GM23248 (cell line): ENCODE measurements at regions of chr1 and their contacts with region 1.

Region 1: GRCh38 chr1:230772457-230773395 is 25.5 kb downstream of the CAPN9 start:
- DNase-seq: peak; percentile 77
- H3K4me3 ChIP-seq: no peak overlapping the region
- H3K27ac ChIP-seq: 0 out of 2 replicates have a peak overlapping the region, but pooled peaks have one; percentile 27
- H3K4me1 ChIP-seq: peaks cover 17% of the 10 kb centered on the region
- H3K27me3 ChIP-seq: peaks cover 1% of the 10 kb centered on the region; the same call in 1 of the 2 replicates

Region 2: DNA sequence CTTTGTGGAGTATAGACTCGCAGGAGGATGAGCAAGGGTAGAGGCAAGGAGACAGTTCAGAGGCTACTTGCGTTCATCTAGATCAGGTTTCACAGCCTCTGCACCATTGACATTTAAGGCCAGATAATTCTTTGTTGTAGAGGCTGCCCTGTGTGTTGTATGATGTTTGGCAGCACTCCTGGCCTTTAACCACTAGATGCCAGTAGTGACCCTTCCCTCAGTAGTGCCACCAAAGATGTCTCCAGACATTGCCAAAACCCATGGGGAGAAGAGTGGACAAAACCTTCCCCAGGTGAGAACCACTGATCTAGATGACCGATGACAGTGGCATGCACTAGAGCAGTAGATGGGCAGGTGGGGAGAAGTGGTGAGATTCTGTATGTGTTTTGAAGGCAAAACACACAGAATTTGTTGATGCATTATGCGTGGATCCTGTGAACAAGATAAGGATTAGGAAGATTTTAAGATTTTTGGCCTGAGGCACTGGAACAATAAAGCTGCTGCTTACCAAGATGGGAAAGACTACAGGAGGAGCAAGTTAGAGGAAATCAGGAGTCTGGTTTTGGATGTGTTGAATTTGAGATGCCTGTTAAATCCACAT is 140.4 kb before region 1 on chr1:
- in situ Hi-C with region 1: loop called (anchors 10 kb)
- DNase-seq: peak; percentile 50
- H3K4me3 ChIP-seq: no peak overlapping the region
- H3K27ac ChIP-seq: no peak overlapping the region
- H3K4me1 ChIP-seq: no peaks in the 10 kb centered on the region
- H3K27me3 ChIP-seq: peaks cover 5% of the 10 kb centered on the region; the same call in 1 of the 2 replicates

Region 3: GRCh38 chr1:231232870-231233734 is 460.4 kb after region 1 on chr1:
- in situ Hi-C with region 1: no loop called
- DNase-seq: no peak
- H3K4me3 ChIP-seq: no peak overlapping the region
- H3K27ac ChIP-seq: no peak overlapping the region
- H3K4me1 ChIP-seq: no peaks in the 10 kb centered on the region
- H3K27me3 ChIP-seq: no peaks in the 10 kb centered on the region